G401 (cell line): ENCODE measurements at regions of chr1 and their contacts with region 1.

Region 1: DNA sequence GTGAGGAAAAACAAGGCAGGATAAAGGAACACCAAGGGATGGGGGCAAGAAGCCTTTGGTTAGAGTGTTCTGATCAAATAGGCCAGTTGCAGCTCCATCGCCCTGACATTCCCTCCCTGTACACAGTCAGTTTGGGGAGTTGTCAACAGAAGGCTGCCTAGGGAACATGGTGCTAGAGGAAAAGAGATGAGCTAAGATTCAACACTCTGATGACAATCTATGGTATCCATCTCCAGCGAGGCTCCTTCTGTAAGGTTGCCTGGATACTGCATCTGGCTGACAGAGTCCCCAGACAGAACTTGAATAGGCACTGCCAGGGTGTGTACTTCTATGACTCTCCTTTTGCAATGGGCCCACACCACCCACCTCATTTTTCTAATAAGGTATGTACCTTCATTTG is 11.2 kb upstream of the SLAMF9 start:
- DNase-seq: no peak

Region 2: DNA sequence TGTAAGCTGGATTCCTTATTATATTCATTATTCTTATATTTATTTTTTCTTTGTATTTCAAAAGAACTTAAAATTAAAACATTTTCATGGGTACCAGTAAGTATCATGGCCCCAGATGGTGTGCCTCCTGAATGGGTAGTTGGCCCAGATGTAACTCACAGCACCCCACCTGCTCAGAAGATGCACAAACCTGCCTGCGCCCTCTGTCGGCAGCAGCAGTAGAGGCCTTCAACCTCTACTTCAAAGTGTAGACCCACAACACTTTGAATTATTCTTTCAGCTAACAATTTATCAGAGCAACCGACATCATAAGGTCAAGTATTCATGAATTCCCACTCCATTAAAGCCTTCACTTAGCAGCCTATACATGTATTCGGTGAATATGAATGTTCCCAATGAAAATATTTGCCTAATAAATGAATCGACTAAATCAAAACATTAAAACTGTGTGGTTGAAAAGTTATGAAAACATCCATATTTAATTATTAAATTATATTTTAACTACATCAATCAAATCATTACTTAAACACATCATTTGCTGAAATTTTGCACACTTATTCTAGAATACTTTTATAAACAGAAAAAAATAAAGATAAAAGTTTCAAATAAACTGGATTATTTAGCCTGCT is 41.2 kb after region 1 on chr1:
- in situ Hi-C with region 1: loop called (anchors 5 kb)
- DNase-seq: peak; percentile 19

Region 3: DNA sequence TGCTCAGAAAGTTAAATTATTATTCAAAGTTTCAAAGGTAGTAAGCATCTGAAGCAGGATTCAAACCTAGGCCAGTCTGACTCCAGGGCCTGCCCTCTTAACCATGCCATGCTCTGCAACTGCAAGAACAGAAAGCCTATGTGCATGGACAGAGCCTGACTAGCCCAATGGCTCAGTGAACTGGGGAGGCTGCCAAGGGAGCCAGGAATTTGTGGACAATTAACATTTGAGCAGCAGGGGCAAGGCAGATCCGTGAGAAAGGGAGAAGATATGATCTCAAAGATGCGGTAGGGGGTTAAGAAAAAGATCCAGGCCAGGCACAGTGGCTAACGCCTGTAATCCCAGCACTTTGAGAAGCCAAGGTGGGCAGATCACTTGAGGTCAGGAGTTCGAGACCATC is 179.7 kb after region 1 on chr1:
- in situ Hi-C with region 1: no loop called
- DNase-seq: no peak